ENCODE measurements at regions of chr20 and their contacts with region 1.

Region 1: DNA sequence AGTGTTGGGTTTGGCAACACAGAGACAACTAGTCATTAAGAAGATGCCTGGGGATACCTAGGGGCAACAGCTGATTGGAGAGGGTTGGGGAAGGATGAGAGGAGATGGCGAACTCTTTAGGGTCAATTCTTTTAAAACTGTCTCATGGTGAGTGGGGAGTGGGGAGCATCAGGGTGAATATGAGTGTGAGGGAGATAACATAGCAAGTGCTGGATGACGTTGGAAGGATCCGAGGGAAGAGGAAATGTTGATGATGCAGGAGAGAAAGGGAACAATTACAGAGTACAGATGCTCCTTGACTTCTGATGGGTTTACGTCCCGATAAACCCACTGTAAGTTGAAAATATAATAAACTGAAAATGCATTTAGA is 13.4 kb upstream of the SALL4 start:
- DNase-seq: no peak
- H3K4me3 ChIP-seq: no peak overlapping the region
- H3K27ac ChIP-seq: no peak overlapping the region
- H3K4me1 ChIP-seq: no peaks in the 10 kb centered on the region
- H3K27me3 ChIP-seq: no peaks in the 10 kb centered on the region
- CTCF ChIP-seq: no peak
- EP300 ChIP-seq: no peak
- POLR2A ChIP-seq: no peak

Region 2: DNA sequence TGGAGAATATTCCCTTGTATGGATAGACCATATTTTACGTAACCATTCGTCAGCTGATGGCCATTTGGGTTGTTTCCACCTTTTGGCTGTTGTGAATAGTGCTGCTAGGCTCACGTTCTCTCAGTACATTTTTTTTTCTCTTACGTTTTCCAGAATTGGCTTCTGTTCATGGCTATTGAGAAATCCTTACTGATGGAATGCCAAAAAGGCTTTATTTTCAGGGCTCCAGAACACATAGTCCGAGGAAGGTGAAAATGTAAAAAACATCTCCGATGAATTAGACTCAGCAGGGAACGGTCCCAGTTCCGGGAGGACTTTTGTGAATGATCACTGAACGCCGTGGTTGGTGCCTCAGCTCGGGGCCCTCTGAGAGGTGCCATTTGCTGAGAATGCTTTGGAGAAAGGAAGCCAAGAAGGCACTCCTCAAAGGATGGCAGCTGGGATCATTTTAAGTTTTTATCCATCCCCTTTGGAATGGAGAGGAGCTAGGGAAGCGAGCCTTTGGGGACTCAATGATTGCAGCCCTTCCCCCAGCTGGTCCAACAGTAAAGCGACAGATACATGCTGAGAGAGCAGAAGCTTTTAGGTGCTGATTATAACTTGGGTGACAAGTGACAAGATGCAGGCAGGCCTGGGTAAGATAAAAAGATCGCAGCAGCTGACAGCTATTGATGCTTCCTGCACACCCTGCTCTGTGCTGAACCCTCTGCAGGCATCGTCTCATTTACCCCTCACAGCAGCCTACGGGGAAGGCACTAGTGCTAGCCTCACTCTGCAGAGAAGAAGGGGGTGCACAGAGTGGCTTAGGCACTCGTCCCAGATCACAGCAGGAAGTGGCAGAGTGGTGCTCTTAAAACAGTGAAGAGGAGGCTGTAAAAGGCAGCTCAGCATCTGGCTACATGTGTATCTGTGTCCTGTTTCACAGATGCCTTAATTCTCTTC is 659.4 kb before region 1 on chr20:
- in situ Hi-C with region 1: no loop called
- intact Hi-C with region 1: no loop called
- DNase-seq: no peak
- H3K4me3 ChIP-seq: peak overlapping the region in 1 of 4 donors; percentile 6
- H3K27ac ChIP-seq: peak overlapping the region in 2 of 4 donors; percentile 69 to 82
- H3K4me1 ChIP-seq: peaks cover 0 to 10% (median 0%) of the 10 kb centered on the region in 4 donors
- H3K27me3 ChIP-seq: no peaks in the 10 kb centered on the region
- CTCF ChIP-seq: no peak
- EP300 ChIP-seq: no peak
- POLR2A ChIP-seq: no peak

Region 3: DNA sequence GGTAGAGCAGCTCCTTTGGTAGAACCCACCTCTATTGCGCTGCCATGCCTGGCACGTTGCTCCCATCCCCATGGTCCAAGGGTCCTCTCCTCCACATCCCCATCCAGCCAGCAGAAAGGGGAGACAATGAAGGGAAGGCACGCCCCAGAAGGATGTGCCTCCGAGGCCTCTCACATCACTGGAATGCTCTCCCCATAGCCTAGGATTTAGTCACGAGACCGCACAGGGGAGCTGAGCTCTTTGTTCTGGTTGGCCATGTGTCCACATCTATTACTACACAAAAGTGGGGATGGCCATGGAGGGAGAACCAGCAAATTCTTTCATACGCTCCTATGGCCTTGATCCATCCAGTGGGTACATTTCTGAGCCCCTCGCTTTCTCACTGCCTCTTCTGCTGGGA is 47.0 kb after region 1 on chr20:
- in situ Hi-C with region 1: no loop called
- intact Hi-C with region 1: loop called (anchors 1 kb)
- DNase-seq: no peak
- H3K4me3 ChIP-seq: no peak overlapping the region
- H3K27ac ChIP-seq: no peak overlapping the region
- H3K4me1 ChIP-seq: peaks cover 0 to 12% (median 6%) of the 10 kb centered on the region in 4 donors
- H3K27me3 ChIP-seq: peaks cover 70% of the 10 kb centered on the region
- CTCF ChIP-seq: no peak
- EP300 ChIP-seq: no peak
- POLR2A ChIP-seq: no peak

Region 4: GRCh38 chr20:51899668-51900067 is 83.9 kb after region 1 on chr20:
- in situ Hi-C with region 1: no loop called
- intact Hi-C with region 1: no loop called
- DNase-seq: no peak
- H3K4me3 ChIP-seq: no peak overlapping the region
- H3K27ac ChIP-seq: no peak overlapping the region
- H3K4me1 ChIP-seq: no peaks in the 10 kb centered on the region
- H3K27me3 ChIP-seq: no peaks in the 10 kb centered on the region
- CTCF ChIP-seq: no peak
- EP300 ChIP-seq: no peak
- POLR2A ChIP-seq: no peak

Region 5: GRCh38 chr20:52446421-52447224 is 630.9 kb after region 1 on chr20:
- in situ Hi-C with region 1: no loop called
- intact Hi-C with region 1: no loop called
- DNase-seq: no peak
- H3K4me3 ChIP-seq: no peak overlapping the region
- H3K27ac ChIP-seq: no peak overlapping the region
- H3K4me1 ChIP-seq: no peaks in the 10 kb centered on the region
- H3K27me3 ChIP-seq: no peaks in the 10 kb centered on the region
- CTCF ChIP-seq: no peak
- EP300 ChIP-seq: no peak
- POLR2A ChIP-seq: no peak

Measured in transverse colon (tissue), 4 donors.